AG04450 (cell line): ENCODE measurements at regions of chr1 and their contacts with region 1.

Region 1: DNA sequence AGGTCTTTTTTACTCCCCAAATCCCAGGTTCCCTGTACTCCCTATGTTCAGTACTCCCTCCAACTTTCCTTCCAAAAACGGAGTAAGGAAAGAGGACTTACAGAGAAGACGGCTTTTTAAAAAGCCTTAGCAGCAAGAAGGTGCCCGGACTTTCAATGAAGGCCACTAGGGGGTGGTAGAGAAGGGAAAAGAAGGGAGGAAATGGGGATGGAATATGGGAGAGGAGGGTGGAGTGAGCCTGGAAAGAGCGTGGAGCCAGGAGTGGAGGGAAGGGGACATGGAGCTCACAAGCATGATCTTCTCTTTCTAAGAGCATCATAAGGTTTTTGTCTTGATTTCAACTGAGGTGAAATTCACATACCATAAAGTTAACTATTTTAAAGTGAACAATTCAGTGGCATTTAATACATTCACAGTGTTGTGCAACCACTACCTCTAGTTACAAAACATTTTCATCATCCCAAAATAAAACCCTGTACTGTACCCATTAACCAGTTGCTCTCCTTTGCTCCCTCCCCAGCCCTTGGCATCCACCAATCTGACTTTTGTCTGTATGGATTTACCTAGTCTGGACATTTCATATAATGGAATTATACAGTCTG is 129.9 kb downstream of the ZNF281 start:
- DNase-seq: peak; percentile 8
- H3K4me3 ChIP-seq: no peak overlapping the region
- H3K27ac ChIP-seq: no peak overlapping the region
- H3K27me3 ChIP-seq: no peaks in the 10 kb centered on the region
- CTCF ChIP-seq: peak; percentile 73

Region 2: DNA sequence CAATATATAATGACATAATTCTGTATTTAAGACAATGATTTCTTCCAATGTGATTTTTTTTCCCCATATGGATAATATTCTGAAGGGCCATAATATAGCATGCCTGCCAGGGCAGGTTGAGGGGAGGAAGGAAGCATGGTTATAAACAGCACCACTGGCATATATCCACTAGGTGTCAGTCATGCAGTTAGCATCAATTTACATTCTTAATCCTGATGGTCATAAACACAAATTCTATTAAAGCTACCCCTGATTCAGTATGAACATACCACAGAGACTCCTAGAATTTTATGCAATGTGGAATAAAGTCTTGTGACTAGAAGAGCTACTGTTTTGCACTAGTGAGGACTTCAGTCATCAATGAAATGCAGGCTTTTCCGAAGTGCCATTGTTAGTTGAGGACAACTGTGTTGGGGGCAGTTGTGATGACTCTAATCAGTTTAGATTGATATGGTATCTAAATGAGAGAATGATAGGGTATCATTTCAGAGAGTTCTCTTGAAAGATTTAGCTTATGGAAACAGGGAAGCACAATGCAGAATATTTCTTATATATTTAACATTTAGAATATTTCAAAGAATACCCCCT is 595.1 kb before region 1 on chr1:
- CTCF ChIA-PET with region 1: interaction called, 17 read pairs
- POLR2A ChIA-PET with region 1: no interaction called
- DNase-seq: peak; percentile 30
- H3K4me3 ChIP-seq: no peak overlapping the region
- H3K27ac ChIP-seq: no peak overlapping the region
- H3K27me3 ChIP-seq: no peaks in the 10 kb centered on the region
- CTCF ChIP-seq: peak; percentile 83

Region 3: GRCh38 chr1:200290010-200290685 is 10.2 kb after region 1 on chr1:
- CTCF ChIA-PET with region 1: interaction called, 11 read pairs
- POLR2A ChIA-PET with region 1: no interaction called
- DNase-seq: no peak
- H3K4me3 ChIP-seq: no peak overlapping the region
- H3K27ac ChIP-seq: no peak overlapping the region
- H3K27me3 ChIP-seq: no peaks in the 10 kb centered on the region
- CTCF ChIP-seq: 0 out of 2 replicates have a peak, but pooled peaks have one; percentile 1

Region 4: DNA sequence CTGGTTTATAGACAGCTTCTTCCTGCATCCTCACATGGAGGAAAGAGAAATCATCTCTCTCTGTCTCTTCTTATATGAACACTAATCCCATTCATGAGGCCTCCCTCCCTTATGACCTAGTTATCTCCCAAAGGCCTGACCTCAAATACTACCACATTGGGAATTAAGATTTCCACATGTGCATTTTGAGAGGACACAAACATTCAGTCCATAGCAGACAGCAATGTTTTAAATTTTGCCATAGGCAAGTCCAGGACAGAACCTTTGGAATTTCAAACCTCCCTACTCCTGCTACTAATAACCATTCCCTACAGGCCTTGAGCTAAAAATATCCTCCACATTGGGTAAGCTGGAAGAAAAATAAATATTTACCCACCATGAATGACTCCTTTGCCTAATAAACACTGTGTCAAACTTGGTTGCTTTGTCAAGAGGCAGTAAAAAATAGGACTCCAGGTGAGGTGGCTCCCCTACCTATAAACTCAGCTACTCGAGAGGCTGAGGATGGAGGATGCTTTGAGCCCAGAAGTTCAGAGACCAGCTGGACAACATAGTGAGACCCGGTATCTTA is 16.3 kb after region 1 on chr1:
- CTCF ChIA-PET with region 1: interaction called, 11 read pairs
- POLR2A ChIA-PET with region 1: no interaction called
- DNase-seq: no peak
- H3K4me3 ChIP-seq: no peak overlapping the region
- H3K27ac ChIP-seq: no peak overlapping the region
- H3K27me3 ChIP-seq: no peaks in the 10 kb centered on the region
- CTCF ChIP-seq: no peak

Region 5: DNA sequence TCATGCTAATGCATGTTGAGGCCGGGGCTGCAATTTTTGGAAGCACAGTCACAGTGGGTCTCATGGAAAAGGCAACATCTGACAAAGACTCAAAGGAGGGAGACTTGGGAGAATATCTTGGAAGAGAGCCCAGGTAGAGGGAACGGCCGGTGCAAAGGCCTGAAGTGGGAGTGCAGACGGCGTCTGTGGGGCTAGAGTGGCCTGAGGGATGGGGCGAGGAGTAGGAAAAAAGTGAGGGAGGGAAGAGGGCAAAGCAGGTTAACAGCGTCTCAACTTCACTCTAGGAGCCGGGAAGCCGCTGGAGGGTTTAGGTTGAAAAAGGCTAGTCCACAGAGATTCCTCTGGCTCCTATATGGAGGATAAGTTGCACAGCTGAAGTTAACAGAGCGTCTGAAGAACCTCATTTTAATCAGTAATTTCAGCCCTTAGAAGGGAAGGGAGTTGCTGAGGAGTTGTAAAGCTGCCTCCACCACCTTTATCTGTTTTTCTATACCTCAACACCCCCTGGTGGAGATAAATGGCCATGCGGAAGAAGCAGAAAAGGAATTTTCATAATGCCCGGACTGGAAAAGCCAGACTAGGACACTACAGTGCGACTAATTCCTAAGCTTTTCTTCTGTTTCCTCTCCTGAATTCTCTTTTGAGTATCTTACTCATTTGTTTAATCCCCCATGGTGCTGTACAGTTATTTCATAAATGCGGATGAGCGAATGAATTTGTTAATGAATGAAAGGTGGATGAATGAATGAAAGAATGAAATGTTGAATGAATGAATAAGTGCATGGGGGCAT is 208.7 kb after region 1 on chr1:
- CTCF ChIA-PET with region 1: interaction called, 45 read pairs
- POLR2A ChIA-PET with region 1: no interaction called
- DNase-seq: peak; percentile 66
- H3K4me3 ChIP-seq: no peak overlapping the region
- H3K27ac ChIP-seq: peak overlapping the region; percentile 61
- H3K27me3 ChIP-seq: no peaks in the 10 kb centered on the region
- CTCF ChIP-seq: peak; percentile 88

Region 6: DNA sequence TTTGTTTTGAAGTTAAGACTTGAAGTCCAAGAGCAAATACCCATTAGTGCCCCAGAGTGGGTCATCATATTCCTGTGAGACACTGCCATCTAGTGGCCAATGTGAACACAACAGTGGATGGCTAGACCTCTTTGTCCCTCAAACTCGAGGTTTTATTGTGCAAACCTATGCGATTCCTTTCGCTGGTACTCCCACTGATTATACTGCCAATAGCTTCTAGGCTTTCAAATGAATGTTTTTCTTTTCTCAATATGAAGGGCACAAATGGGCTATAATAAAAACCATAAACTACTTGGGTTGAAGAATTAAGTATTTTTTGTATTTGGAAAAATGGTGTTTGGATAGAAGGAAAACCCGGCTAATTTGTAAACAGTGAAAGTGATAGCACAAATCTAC is 230.3 kb after region 1 on chr1:
- CTCF ChIA-PET with region 1: interaction called, 37 read pairs
- POLR2A ChIA-PET with region 1: no interaction called
- DNase-seq: peak; percentile 74
- H3K4me3 ChIP-seq: no peak overlapping the region
- H3K27ac ChIP-seq: no peak overlapping the region
- H3K27me3 ChIP-seq: no peaks in the 10 kb centered on the region
- CTCF ChIP-seq: peak; percentile 89

Region 7: GRCh38 chr1:200969726-200970561 is 690.0 kb after region 1 on chr1:
- CTCF ChIA-PET with region 1: no interaction called
- POLR2A ChIA-PET with region 1: no interaction called
- DNase-seq: no peak
- H3K4me3 ChIP-seq: no peak overlapping the region
- H3K27ac ChIP-seq: no peak overlapping the region
- H3K27me3 ChIP-seq: peaks cover 7% of the 10 kb centered on the region
- CTCF ChIP-seq: no peak